GM12878 (cell line): ENCODE measurements at regions of chr12 and their contacts with region 1.

Region 1: GRCh38 chr12:81819991-81820633 is 61.0 kb upstream of the PPFIA2 start:
- DNase-seq: no peak
- ATAC-seq: no peak
- H3K4me3 ChIP-seq: no peak overlapping the region
- H3K27ac ChIP-seq: no peak overlapping the region
- H3K4me1 ChIP-seq: no peaks in the 10 kb centered on the region
- H3K27me3 ChIP-seq: no peaks in the 10 kb centered on the region
- CTCF ChIP-seq: no peak
- EP300 ChIP-seq: no peak
- POLR2A ChIP-seq: no peak
- RAD21 ChIP-seq: no peak

Region 2: GRCh38 chr12:81181691-81182090 is 638.4 kb before region 1 on chr12:
- CTCF ChIA-PET with region 1: no interaction called
- POLR2A ChIA-PET with region 1: no interaction called
- RAD21 ChIA-PET with region 1: no interaction called
- SMC1A ChIA-PET with region 1: no interaction called
- in situ Hi-C with region 1: no loop called
- intact Hi-C with region 1: no loop called
- DNase-seq: no peak
- ATAC-seq: no peak
- H3K4me3 ChIP-seq: no peak overlapping the region
- H3K27ac ChIP-seq: no peak overlapping the region
- H3K4me1 ChIP-seq: no peaks in the 10 kb centered on the region
- H3K27me3 ChIP-seq: no peaks in the 10 kb centered on the region
- CTCF ChIP-seq: no peak
- EP300 ChIP-seq: no peak
- POLR2A ChIP-seq: no peak
- RAD21 ChIP-seq: no peak

Region 3: DNA sequence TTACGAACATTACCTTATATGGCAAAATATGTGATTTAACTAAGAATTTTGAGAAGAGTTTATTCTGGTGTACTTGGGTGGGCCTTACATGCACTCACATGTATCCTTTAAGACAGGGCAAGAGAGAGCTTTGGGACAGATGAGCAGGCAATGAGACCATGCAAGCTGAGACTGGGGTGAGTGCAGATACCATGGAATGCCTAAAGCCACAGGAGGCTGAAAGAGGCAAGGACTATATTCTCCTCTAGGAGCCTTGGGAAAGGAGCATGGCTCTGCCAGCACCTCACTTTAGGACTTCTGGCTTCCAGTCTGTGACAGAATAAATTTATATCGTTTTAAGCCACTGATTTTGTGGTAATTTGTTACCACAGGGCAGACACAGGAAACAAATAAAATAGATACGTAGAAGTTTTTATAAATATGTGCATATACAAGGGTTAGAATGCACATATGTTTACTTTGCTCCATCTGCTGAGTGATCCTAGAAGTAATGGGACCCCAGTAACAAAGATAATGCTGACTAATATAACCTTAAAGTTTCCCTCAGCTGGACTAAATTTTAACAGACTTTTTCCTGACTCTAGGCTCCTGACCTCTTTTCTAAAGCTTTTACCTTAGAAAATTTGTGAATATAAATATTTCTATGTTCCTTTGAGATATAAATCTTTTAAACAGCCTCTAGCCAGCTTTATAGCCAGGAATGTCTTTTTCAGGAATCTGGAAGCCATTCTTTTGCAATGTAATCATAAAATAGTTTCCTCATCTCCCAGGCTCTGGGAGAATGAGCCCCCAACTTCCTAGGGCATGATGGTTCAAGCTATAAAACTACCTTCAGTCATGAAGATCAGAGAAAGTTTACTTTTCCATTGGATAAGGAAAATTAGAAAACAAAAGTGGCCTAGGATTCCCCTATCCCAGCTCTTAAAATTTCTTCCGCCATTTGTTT is 277.8 kb before region 1 on chr12:
- CTCF ChIA-PET with region 1: no interaction called
- POLR2A ChIA-PET with region 1: no interaction called
- RAD21 ChIA-PET with region 1: no interaction called
- SMC1A ChIA-PET with region 1: no interaction called
- in situ Hi-C with region 1: no loop called
- intact Hi-C with region 1: no loop called
- DNase-seq: no peak
- ATAC-seq: no peak
- H3K4me3 ChIP-seq: no peak overlapping the region
- H3K27ac ChIP-seq: no peak overlapping the region
- H3K4me1 ChIP-seq: no peaks in the 10 kb centered on the region
- H3K27me3 ChIP-seq: no peaks in the 10 kb centered on the region
- CTCF ChIP-seq: no peak
- EP300 ChIP-seq: no peak
- POLR2A ChIP-seq: no peak
- RAD21 ChIP-seq: no peak

Region 4: DNA sequence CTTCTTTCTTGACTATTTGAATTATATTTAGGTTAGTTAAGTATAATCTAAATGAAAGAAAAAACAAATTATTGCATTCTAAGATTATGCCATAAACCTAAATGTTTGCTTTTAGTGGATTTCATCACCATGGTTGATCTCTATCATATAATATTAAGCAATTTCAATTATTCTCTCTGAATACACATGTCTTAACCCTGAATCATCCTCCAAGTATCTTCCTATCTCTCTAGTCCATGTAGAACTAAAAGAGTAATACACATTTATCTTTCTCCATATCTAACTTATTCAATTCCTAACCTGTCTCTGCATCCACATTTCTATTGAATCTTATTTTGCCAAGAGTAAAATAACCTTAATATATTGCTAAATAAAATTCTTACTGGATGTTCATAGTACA is 120.5 kb before region 1 on chr12:
- CTCF ChIA-PET with region 1: no interaction called
- POLR2A ChIA-PET with region 1: no interaction called
- RAD21 ChIA-PET with region 1: no interaction called
- SMC1A ChIA-PET with region 1: no interaction called
- in situ Hi-C with region 1: no loop called
- intact Hi-C with region 1: no loop called
- DNase-seq: no peak
- ATAC-seq: no peak
- H3K4me3 ChIP-seq: no peak overlapping the region
- H3K27ac ChIP-seq: no peak overlapping the region
- H3K4me1 ChIP-seq: no peaks in the 10 kb centered on the region
- H3K27me3 ChIP-seq: no peaks in the 10 kb centered on the region; a peak in 1 of 4 replicates
- CTCF ChIP-seq: no peak
- EP300 ChIP-seq: no peak
- POLR2A ChIP-seq: no peak
- RAD21 ChIP-seq: no peak

Region 5: DNA sequence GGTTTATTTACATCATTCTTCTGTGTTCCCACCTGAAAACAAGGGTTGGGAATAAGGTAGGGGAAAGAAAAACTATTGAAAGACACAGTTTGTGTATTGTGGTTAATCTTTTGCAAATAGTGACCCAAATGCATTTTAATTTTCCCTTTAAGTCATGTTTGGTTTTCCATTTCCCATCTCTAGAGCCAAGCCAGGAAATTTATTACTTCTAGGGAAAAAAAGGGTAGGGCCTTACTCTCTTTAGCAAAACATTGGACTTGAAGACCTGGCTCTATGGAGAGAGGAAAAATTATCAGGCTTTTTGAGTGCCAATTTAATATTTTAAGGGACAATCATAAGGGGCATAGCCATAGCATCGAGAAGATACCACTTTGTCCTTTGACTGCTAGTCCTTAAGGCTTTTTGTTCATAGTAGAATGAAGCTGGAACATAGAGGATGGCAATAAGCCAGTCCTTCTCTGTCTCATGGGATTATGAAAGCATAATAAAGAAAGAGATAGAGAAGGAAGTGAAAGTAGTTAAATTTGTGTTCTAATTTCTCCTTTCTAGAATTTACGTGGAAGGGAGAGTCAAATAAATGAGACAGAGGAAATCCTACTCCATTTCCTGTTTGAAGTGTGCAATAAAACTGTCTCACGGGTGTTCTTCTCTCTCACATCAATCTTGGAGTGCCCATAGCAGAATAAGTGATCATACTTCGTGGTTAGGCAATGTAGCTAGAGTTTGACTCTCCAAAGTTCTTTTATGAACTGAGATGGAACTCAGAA is 10.1 kb before region 1 on chr12:
- CTCF ChIA-PET with region 1: no interaction called
- POLR2A ChIA-PET with region 1: no interaction called
- RAD21 ChIA-PET with region 1: no interaction called
- SMC1A ChIA-PET with region 1: interaction called, 10 read pairs
- in situ Hi-C with region 1: no loop called
- intact Hi-C with region 1: no loop called
- DNase-seq: peak; percentile 3
- ATAC-seq: peak; percentile 93
- H3K4me3 ChIP-seq: no peak overlapping the region
- H3K27ac ChIP-seq: no peak overlapping the region
- H3K4me1 ChIP-seq: no peaks in the 10 kb centered on the region
- H3K27me3 ChIP-seq: no peaks in the 10 kb centered on the region
- CTCF ChIP-seq: no peak
- EP300 ChIP-seq: peak; percentile 58 to 80; a peak in 2 of 4 replicates
- POLR2A ChIP-seq: no peak
- RAD21 ChIP-seq: no peak

Region 6: GRCh38 chr12:81866081-81866480 is 46.0 kb after region 1 on chr12:
- CTCF ChIA-PET with region 1: no interaction called
- POLR2A ChIA-PET with region 1: no interaction called
- RAD21 ChIA-PET with region 1: no interaction called
- SMC1A ChIA-PET with region 1: no interaction called
- in situ Hi-C with region 1: no loop called
- intact Hi-C with region 1: no loop called
- DNase-seq: no peak
- ATAC-seq: no peak; the same call in 2 of the 3 replicates
- H3K4me3 ChIP-seq: no peak overlapping the region
- H3K27ac ChIP-seq: no peak overlapping the region
- H3K4me1 ChIP-seq: no peaks in the 10 kb centered on the region
- H3K27me3 ChIP-seq: no peaks in the 10 kb centered on the region
- CTCF ChIP-seq: no peak
- EP300 ChIP-seq: no peak
- POLR2A ChIP-seq: no peak
- RAD21 ChIP-seq: no peak